ENCODE measurements at regions of chr19 and their contacts with region 1.

Region 1: GRCh38 chr19:46825525-46825971 is 25.1 kb downstream of the AP2S1 start:
- DNase-seq: no peak
- ATAC-seq: no peak
- H3K4me3 Mint-ChIP-seq: no peak overlapping the region
- H3K27ac Mint-ChIP-seq: no peak overlapping the region
- H3K4me1 Mint-ChIP-seq: peaks cover 14% of the 10 kb centered on the region
- H3K27me3 Mint-ChIP-seq: no peaks in the 10 kb centered on the region
- CTCF ChIP-seq: no peak

Region 2: DNA sequence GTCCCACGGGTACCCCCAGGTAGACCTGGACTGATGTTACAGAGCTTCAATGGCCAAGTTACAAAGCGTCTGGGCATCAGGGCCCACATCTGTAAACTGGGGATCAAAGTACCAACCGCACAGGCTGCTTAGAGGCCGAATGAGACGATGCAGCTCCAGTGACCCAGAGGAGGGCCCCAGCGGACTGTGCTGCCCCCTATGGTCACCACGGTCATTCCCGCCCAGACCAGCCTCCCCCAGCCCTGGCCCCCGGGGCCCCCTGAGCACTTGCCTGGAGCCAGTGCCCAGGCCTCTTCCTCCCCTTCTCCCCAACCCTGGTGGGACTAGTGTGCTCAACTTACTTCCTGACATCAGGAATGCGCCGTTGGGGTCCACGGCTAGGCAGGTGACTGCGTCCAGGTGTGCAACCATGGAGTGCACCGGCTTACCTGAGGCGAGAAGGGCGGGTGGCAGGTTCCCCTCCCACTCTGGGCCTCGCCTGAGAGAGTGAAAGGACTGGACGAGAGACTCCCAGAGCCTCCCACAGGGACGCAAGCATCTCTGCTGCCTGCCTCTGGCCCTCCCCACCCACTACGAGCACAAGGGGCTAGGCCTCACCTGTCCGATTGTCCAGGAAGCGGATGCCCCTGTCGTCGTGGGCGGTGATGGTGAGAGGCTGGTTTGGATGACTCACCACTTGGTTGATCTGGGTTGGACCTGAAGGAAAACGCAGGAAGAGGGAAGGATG is 103.7 kb before region 1 on chr19:
- CTCF ChIA-PET with region 1: no interaction called
- POLR2A ChIA-PET with region 1: no interaction called
- DNase-seq: peak; percentile 64
- ATAC-seq: peak; percentile 9; the same call in 1 of the 2 replicates
- H3K4me3 Mint-ChIP-seq: no peak overlapping the region
- H3K27ac Mint-ChIP-seq: peak overlapping the region; percentile 97
- H3K4me1 Mint-ChIP-seq: peaks cover 16% of the 10 kb centered on the region
- H3K27me3 Mint-ChIP-seq: no peaks in the 10 kb centered on the region; the same call in 1 of the 2 replicates
- CTCF ChIP-seq: peak; percentile 29; the same call in 1 of the 2 replicates

Region 3: DNA sequence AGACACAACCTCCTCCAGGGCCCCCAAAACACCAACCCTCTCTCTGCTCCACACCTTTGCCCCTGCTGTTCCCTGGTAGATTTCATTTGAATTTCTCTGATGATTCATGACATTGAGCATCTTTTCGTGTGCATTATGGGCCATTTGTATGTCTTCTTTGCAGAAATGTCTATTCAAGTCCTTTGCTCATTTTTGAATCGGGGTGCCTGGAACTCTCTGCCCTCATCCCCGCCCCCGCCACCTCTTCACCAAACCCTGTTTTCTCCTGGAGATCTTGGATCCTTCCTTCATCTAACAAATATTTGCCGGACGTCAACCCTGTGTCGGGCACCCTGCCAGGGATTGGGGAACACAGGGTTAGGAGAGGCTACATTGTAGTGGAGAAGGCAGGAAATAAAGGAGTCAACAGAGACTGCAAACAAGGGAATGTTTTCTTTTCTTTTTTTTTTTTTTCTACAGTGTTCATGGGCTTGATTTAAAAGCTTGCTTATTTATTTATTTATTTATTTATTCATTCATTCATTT is 11.6 kb before region 1 on chr19:
- CTCF ChIA-PET with region 1: interaction called, 10 read pairs
- POLR2A ChIA-PET with region 1: interaction called, 3 read pairs
- DNase-seq: no peak
- ATAC-seq: no peak
- H3K4me3 Mint-ChIP-seq: no peak overlapping the region
- H3K27ac Mint-ChIP-seq: no peak overlapping the region
- H3K4me1 Mint-ChIP-seq: peaks cover 10% of the 10 kb centered on the region
- H3K27me3 Mint-ChIP-seq: no peaks in the 10 kb centered on the region; the same call in 1 of the 2 replicates
- CTCF ChIP-seq: no peak

Measured in WTC11 (cell line).